GM12878 (cell line): ENCODE measurements at regions of chr17 and their contacts with region 1.

Region 1: GRCh38 chr17:1716076-1716995 is 6.2 kb upstream of the TLCD2 start:
- DNase-seq: peak; percentile 99
- ATAC-seq: peak; percentile 89
- H3K4me3 ChIP-seq: peak overlapping the region; percentile 98
- H3K27ac ChIP-seq: peak overlapping the region; percentile 98
- H3K4me1 ChIP-seq: peaks cover 4% of the 10 kb centered on the region
- H3K27me3 ChIP-seq: no peaks in the 10 kb centered on the region
- CTCF ChIP-seq: no peak; a peak in 1 of 6 replicates
- EP300 ChIP-seq: no peak
- POLR2A ChIP-seq: peak; percentile 99
- RAD21 ChIP-seq: no peak

Region 2: DNA sequence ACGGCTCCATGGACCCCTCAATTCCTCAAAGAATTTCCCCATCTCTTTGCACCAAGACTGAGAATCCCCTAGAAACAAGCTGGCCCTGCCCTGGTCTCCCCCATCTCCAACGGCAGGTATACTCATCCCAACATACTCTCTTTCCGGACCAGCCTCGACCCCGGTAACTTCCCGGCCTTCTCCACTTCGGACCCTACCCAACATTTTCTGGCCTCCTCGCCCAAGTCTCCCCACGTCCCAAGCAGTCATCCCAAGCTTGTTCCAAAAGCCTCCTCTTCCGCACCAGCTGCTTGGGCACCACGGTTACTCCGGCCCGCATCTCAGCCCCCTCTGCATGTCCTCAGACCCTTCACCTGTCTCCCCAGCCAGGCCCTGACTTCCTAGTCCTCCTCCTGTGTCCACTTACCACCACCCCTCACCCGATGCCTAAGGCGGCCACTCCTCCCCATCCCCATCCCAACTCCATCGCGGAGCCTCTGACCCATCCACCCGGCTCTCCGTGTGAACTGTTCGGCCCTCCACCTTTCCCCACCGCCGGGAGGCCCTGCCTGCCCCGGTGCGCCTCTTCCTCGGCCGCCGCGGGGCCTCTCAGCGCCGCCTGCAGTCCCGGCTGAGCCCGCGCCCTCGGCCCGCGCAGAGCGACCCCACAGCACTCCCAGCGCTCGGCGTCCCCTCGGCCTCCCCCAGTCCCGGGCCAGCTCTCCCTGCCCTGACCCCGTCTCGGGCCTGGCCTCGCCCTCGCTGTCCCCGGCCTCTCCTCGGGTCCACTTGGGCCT is 154.7 kb before region 1 on chr17:
- CTCF ChIA-PET with region 1: no interaction called
- POLR2A ChIA-PET with region 1: interaction called, 8 read pairs
- RAD21 ChIA-PET with region 1: no interaction called
- SMC1A ChIA-PET with region 1: no interaction called
- in situ Hi-C with region 1: no loop called
- intact Hi-C with region 1: loop called (anchors 5 kb)
- DNase-seq: no peak
- ATAC-seq: peak; percentile 63
- H3K4me3 ChIP-seq: peak overlapping the region; percentile 86
- H3K27ac ChIP-seq: peak overlapping the region; percentile 37; the same call in 1 of the 2 replicates
- H3K4me1 ChIP-seq: peaks cover 26% of the 10 kb centered on the region
- H3K27me3 ChIP-seq: no peaks in the 10 kb centered on the region
- CTCF ChIP-seq: peak; percentile 30 to 41 (median 41); a peak in 4 of 6 replicates
- EP300 ChIP-seq: no peak
- POLR2A ChIP-seq: peak; percentile 62
- RAD21 ChIP-seq: 0 out of 2 replicates have a peak, but pooled peaks have one; percentile 15

Region 3: DNA sequence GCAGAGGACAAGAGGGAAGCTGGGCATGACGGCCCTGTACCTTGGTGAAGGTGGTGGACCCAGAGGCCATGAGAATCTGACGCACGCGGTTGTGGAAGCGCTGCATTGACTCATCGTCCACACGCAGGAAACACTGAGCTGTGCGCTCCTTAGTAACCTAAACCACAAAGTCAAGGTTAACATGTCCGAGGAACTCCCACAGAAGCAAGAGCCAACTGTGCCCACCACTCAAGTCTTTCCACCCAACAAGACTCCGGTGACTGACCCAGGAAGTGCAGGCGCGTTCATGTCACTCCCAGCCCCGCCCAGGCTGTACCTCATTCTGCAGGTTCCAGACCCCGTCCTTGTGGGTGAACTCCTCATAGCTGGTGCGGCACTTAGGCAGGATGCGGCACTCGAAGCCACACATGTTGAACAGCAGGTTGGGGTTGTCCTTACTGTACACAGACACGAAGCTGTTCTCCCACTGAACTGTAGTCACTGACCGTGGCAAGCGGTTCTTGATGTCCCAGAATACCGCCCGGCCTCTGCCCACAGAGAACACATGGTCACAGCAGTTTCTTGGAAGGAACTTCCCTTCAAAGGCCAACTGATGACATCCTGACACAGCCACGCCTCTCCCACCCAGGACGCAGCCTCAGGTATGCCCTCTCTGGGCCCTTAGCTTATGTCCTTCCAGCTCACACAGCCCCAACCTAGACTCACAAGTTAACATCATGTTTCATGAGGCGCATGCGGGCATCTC is 43.1 kb before region 1 on chr17:
- CTCF ChIA-PET with region 1: interaction called, 11 read pairs
- POLR2A ChIA-PET with region 1: interaction called, 4 read pairs
- RAD21 ChIA-PET with region 1: interaction called, 11 read pairs
- SMC1A ChIA-PET with region 1: interaction called, 6 read pairs
- in situ Hi-C with region 1: no loop called
- intact Hi-C with region 1: loop called (anchors 5 kb)
- DNase-seq: no peak
- ATAC-seq: no peak
- H3K4me3 ChIP-seq: no peak overlapping the region
- H3K27ac ChIP-seq: no peak overlapping the region
- H3K4me1 ChIP-seq: no peaks in the 10 kb centered on the region
- H3K27me3 ChIP-seq: no peaks in the 10 kb centered on the region
- CTCF ChIP-seq: no peak
- EP300 ChIP-seq: no peak
- POLR2A ChIP-seq: peak; percentile 66
- RAD21 ChIP-seq: no peak

Region 4: GRCh38 chr17:1736348-1737281 is 20.3 kb after region 1 on chr17:
- CTCF ChIA-PET with region 1: interaction called, 13 read pairs
- POLR2A ChIA-PET with region 1: interaction called, 16 read pairs
- RAD21 ChIA-PET with region 1: interaction called, 24 read pairs
- SMC1A ChIA-PET with region 1: interaction called, 15 read pairs
- in situ Hi-C with region 1: no loop called
- intact Hi-C with region 1: no loop called
- DNase-seq: no peak
- ATAC-seq: peak; percentile 92
- H3K4me3 ChIP-seq: peak overlapping the region; percentile 26; the same call in 1 of the 2 replicates
- H3K27ac ChIP-seq: peak overlapping the region; percentile 74
- H3K4me1 ChIP-seq: peaks cover 22% of the 10 kb centered on the region
- H3K27me3 ChIP-seq: no peaks in the 10 kb centered on the region
- CTCF ChIP-seq: no peak; a peak in 1 of 6 replicates
- EP300 ChIP-seq: no peak; a peak in 1 of 4 replicates
- POLR2A ChIP-seq: peak; percentile 10; the same call in 1 of the 2 replicates
- RAD21 ChIP-seq: 0 out of 2 replicates have a peak, but pooled peaks have one; percentile 11

Region 5: DNA sequence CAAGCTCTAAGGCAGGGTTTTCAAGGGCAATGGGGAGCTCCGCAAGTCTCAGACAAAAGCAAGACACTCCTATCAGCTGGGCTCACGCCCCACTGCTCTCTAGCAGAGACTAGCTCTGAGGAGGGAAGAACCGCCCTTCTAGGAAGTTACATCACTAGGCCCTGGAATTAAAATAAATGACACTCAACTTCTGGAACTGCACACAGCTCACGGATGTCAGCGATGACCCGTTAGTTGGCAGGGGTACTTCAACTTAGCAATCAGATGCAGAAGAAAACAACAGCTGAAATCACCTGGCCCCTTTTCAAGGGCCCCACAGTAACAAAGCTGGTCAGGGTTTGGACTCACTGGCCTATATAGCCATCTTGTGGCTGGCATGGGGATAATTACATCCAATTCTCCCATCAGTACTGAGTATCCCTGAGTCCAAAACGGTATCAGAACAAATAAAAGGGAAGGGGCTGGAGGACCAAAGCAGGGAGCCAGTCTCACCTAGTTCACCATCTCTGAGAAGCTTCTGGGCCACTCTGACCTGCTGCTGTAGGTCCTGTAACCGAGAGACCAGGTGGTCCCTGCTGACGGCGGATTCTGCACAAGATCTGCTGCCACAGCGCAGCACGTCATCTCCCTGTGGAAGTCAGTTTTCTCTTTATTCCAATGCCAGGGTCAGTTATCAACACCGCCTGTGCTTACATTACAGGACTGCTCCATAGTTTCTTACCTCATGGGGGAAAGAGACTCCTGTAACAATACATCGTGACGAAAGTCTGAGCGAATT is 67.7 kb after region 1 on chr17:
- CTCF ChIA-PET with region 1: interaction called, 121 read pairs
- POLR2A ChIA-PET with region 1: interaction called, 5 read pairs
- RAD21 ChIA-PET with region 1: interaction called, 80 read pairs
- SMC1A ChIA-PET with region 1: interaction called, 88 read pairs
- in situ Hi-C with region 1: no loop called
- intact Hi-C with region 1: loop called (anchors 1 kb)
- DNase-seq: no peak
- ATAC-seq: peak; percentile 77
- H3K4me3 ChIP-seq: no peak overlapping the region
- H3K27ac ChIP-seq: no peak overlapping the region
- H3K4me1 ChIP-seq: no peaks in the 10 kb centered on the region
- H3K27me3 ChIP-seq: no peaks in the 10 kb centered on the region
- CTCF ChIP-seq: peak; percentile 39 to 63 (median 50); a peak in 4 of 6 replicates
- EP300 ChIP-seq: no peak
- POLR2A ChIP-seq: no peak
- RAD21 ChIP-seq: peak; percentile 69

Region 6: DNA sequence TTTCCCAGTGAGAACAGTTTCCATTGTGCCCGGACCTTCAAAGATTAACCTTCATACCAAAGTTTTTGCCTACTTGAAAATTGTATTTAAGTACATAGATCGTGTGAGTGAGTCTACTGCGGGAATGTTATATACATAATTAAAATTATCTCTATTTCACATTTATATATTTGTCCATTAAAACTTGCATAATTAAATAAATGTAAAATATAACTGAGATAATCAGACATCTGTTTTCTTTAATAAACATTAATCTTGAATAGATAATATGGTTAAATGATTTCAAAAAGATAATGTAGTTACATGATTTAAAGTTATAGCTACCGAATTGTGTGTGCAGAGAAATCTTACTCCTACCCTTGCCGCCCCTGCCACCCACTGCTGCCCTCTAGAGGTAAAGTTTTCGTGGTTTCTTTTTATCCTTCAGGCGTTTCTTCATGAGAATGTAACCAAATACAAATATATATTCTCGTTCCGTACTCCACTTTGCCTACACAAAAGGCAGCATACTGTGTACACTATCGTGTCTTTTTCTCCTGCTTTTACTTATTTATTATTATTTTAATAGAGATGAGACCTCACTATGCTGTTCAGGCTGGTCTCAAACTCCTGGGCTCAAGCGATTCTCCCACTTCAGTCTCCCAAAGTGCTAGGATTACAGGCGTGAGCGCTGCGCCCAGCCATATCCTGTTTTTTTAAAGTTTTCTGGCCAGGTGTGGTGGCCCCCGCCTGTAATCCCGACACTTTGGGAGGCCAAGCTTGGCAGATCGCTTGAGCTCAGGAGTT is 149.1 kb after region 1 on chr17:
- CTCF ChIA-PET with region 1: interaction called, 232 read pairs
- POLR2A ChIA-PET with region 1: interaction called, 7 read pairs
- RAD21 ChIA-PET with region 1: interaction called, 35 read pairs
- SMC1A ChIA-PET with region 1: interaction called, 56 read pairs
- in situ Hi-C with region 1: no loop called
- intact Hi-C with region 1: loop called (anchors 2 kb)
- DNase-seq: no peak
- ATAC-seq: peak; percentile 79
- H3K4me3 ChIP-seq: no peak overlapping the region
- H3K27ac ChIP-seq: no peak overlapping the region
- H3K4me1 ChIP-seq: no peaks in the 10 kb centered on the region
- H3K27me3 ChIP-seq: no peaks in the 10 kb centered on the region
- CTCF ChIP-seq: peak; percentile 54 to 70 (median 59)
- EP300 ChIP-seq: no peak
- POLR2A ChIP-seq: no peak
- RAD21 ChIP-seq: peak; percentile 65

Region 7: DNA sequence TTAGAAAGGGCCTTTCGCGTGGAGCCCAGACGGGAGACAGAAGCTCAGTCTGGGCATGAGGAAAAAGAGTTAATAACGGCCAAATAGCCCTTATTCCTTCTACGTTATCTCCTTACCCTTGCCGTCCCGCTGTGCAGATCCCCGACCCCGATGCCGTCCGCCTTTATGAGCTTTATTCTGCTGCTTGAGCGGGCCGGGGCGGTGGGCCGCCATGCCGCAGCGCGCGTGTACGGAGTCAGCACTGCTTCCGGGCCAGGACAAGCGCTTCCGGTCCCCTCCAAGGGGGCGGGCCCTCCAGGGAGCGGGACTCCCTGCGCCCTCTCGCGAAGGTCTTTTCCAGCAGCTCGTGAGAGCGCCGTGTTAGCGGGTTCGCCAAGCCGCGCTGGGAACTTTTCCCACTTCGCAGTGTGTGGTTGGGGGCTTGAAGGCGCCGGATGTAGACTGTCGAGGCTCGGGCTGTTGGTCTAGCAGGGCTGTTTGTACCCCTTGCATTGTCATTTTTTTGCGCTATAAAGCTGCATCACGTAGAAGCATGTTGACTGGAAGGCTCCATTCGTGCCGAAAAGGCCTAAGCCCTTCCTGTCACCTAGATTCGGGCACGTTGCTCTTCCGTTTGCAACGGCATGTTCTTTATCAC is 620.0 kb after region 1 on chr17 and contains the start of gene TSR1:
- CTCF ChIA-PET with region 1: no interaction called
- POLR2A ChIA-PET with region 1: interaction called, 10 read pairs
- RAD21 ChIA-PET with region 1: interaction called, 3 read pairs
- SMC1A ChIA-PET with region 1: no interaction called
- in situ Hi-C with region 1: no loop called
- intact Hi-C with region 1: no loop called
- DNase-seq: peak; percentile 55
- ATAC-seq: peak; percentile 94
- H3K4me3 ChIP-seq: peak within 1 kb of the TSS; percentile 92
- H3K27ac ChIP-seq: peak within 1 kb of the TSS; percentile 86
- H3K4me1 ChIP-seq: peaks cover 5% of the 10 kb centered on the region
- H3K27me3 ChIP-seq: no peaks in the 10 kb centered on the region
- CTCF ChIP-seq: peak in 2 of 3 experiments; percentile 29 to 45; a peak in 2 of 6 replicates
- EP300 ChIP-seq: no peak
- POLR2A ChIP-seq: peak; percentile 94
- RAD21 ChIP-seq: no peak
- polyA plus RNA-seq, gene TSR1: 14.7 to 21.9 TPM